PC-9 (cell line): ENCODE measurements at regions of chr17 and their contacts with region 1.

Region 1: DNA sequence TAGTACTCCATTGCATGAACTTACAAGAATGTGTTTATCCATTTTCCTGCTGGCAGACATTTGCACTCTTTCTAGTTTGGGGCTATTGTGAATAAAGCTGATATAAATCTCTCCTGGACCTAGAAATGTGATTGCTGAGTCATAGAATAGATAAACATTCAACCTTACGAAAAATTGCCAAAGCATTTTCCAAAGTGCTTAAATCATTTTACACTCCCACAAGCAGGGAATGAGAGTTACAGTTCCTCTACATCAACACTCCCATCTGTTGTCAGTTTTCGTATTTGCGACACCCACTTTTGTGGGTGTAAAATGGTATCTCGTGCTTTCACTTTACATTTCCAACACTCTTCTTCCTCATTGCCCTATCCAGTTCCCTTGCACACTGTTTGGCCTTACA is 13.8 kb downstream of the SOX9 start:
- DNase-seq: peak in 1 of 2 experiments; percentile 59
- H3K4me3 ChIP-seq: no peak overlapping the region
- H3K27ac ChIP-seq: no peak overlapping the region
- H3K4me1 ChIP-seq: peaks cover 44% of the 10 kb centered on the region
- H3K27me3 ChIP-seq: no peaks in the 10 kb centered on the region
- CTCF ChIP-seq: no peak

Region 2: GRCh38 chr17:72151565-72152391 is 17.2 kb after region 1 on chr17:
- CTCF ChIA-PET with region 1: no interaction called
- POLR2A ChIA-PET with region 1: interaction called, 11 read pairs
- intact Hi-C with region 1: no loop called
- DNase-seq: peak; percentile 86 to 99
- H3K4me3 ChIP-seq: peak overlapping the region; percentile 38; the same call in 1 of the 2 replicates
- H3K27ac ChIP-seq: peak overlapping the region; percentile 92
- H3K4me1 ChIP-seq: peaks cover 36% of the 10 kb centered on the region
- H3K27me3 ChIP-seq: no peaks in the 10 kb centered on the region
- CTCF ChIP-seq: no peak

Region 3: GRCh38 chr17:72165867-72166439 is 31.4 kb after region 1 on chr17:
- CTCF ChIA-PET with region 1: no interaction called
- POLR2A ChIA-PET with region 1: no interaction called
- intact Hi-C with region 1: loop called (anchors 2 kb)
- DNase-seq: no peak
- H3K4me3 ChIP-seq: no peak overlapping the region
- H3K27ac ChIP-seq: no peak overlapping the region
- H3K4me1 ChIP-seq: no peaks in the 10 kb centered on the region
- H3K27me3 ChIP-seq: no peaks in the 10 kb centered on the region
- CTCF ChIP-seq: no peak

Region 4: GRCh38 chr17:72173499-72174116 is 39.0 kb after region 1 on chr17:
- CTCF ChIA-PET with region 1: no interaction called
- POLR2A ChIA-PET with region 1: interaction called, 23 read pairs
- intact Hi-C with region 1: no loop called
- DNase-seq: no peak
- H3K4me3 ChIP-seq: no peak overlapping the region
- H3K27ac ChIP-seq: no peak overlapping the region
- H3K4me1 ChIP-seq: no peaks in the 10 kb centered on the region
- H3K27me3 ChIP-seq: no peaks in the 10 kb centered on the region
- CTCF ChIP-seq: no peak